Astrocyte of the cerebellum (primary cell): ENCODE measurements at regions of chr1 and their contacts with region 1.

Region 1: GRCh38 chr1:223249854-223250631 is 107.0 kb upstream of the TLR5 start:
- DNase-seq: no peak
- H3K4me3 ChIP-seq: no peak overlapping the region
- CTCF ChIP-seq: no peak

Region 2: DNA sequence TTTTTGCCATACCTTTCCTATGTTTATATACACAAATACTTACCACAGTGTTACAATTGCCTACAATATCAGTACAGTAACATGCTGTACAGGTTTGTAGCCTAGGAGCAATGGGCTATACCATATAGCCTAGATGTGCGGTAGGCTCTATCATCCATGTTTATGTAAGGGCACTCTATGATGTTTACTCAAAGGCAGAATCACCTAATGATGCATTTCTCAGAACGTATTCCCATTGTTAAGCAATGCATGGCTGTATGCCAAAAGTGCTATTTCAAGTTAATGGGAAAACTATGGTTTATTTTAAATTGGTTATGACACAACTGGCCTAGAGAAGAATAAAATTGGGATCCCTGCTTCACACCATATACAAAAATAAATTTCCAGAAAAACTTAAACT is 472.1 kb before region 1 on chr1:
- in situ Hi-C with region 1: no loop called
- DNase-seq: no peak
- H3K4me3 ChIP-seq: no peak overlapping the region
- CTCF ChIP-seq: no peak

Region 3: DNA sequence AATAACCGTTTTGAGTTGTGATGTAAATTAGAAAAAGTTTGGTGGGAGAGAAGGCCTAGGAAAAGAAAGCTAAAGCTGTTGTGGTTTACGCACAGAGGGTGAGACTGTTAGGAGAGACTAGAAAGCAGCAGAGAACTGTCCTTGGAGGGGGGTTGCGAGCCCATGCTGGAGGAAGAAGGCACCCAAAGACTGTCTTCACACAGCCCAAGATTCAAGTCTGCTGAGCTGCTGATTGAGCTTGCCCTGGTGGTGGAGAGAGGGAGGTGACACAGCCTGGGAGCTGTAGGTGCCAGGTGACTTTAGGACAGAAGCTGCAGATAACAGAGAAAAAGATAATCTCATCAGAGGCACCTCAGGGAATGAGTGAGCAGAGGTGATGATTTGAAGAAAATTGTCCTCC is 88.7 kb before region 1 on chr1:
- in situ Hi-C with region 1: no loop called
- DNase-seq: no peak
- H3K4me3 ChIP-seq: no peak overlapping the region
- CTCF ChIP-seq: no peak

Region 4: DNA sequence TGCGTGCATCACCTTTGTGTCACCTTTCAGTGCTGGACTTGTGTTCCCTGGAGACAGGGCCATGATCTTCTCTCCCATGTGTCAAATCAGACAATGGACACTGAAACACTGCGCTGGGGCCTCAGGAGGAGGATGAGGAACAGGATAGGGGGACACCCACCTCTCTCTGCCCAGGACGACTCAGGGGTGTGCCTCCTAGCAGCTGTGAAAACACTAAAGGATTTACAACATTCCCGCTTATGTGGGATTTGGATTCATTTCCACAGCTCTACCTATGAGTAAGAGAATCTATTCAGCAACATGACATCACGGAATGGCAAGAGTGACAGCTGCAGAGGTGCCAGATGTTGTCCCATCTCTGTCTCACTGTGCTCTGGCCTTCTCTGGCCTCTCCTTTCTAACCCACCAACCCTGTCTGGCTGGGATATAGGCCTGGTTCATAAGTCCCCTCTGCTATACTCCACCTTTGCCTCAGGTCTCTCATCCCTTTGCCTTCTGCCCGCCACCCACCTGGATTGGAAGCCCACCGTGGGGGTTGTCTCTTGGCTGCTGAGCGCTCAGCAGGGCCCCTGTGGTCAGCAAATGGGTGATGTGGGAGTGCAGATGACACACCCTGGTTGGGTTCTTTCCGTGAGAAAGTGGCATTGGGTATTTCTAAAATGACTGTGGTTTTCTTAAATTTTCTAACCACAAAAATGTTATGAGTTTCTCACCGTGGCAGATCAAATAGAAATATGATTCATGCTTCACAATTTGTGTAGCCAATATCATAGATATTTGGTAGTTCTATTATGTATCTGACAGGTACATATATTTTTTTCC is 59.9 kb before region 1 on chr1:
- in situ Hi-C with region 1: loop called (anchors 5 kb)
- DNase-seq: peak; percentile 63
- H3K4me3 ChIP-seq: no peak overlapping the region
- CTCF ChIP-seq: no peak

Region 5: GRCh38 chr1:223331929-223332328 is 81.9 kb after region 1 on chr1:
- in situ Hi-C with region 1: no loop called
- DNase-seq: peak; percentile 68
- H3K4me3 ChIP-seq: no peak overlapping the region
- CTCF ChIP-seq: no peak

Region 6: DNA sequence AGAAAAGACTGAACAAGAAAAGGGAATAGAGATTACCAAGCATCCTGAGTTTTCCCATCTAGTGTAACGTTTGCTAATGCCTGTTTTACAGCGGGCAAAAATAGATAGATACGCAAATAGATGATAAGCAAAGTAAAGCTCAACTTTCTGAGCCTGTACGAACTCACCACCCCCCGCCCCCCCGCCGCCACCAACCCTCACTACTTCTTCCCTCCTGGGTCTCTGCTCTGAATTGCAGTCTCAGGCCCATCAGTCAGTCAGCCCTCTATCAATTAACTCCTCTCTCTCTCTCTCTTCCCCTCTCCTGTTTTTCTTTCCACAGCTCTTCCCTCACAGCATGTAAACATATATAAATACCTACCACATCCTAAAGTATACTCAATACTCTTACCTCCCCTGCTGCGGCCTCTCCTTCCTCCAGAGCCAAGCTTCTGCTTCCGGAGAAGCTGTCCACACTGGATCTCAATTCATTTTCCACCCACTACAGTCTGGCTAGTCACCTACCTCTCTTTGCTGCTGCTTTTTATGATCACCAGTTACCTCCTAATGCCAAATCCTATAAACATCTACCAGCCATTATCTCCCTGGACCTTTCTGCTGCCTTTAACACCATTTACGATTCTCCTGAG is 526.9 kb after region 1 on chr1:
- in situ Hi-C with region 1: no loop called
- DNase-seq: no peak
- H3K4me3 ChIP-seq: no peak overlapping the region
- CTCF ChIP-seq: no peak